MCF 10A (cell line): ENCODE measurements at regions of chr11 and their contacts with region 1.

Region 1: DNA sequence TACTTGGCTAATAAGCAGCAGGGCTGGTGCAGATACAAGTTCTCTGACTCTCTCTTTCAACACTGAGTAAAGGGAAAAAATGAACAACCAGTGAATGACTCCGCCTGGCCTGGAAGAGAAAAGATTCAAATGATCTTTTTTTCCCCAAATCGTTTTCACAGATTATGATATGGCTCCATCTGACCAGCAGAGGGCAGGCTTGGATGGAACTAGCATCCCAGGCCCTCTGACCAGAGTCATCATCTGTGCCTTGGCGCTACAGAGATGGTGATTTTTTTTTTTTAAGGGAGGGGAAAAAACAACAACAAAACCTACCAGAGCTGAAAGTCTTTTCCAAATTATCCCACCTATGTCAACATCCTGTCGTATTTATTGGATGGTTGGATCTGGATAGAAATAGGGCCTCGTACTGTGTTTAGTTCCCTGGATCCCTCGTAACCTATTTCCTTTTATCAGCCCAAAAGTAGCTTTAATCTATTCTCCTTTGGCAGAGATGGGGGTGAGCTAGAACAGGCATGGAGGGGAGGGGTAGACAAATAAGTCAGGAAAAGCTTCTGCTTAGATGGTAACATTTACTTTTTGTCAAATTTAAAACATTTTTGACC is 69.7 kb downstream of the PRSS23 start:
- DNase-seq: peak; percentile 71
- H3K4me3 Mint-ChIP-seq: no peak overlapping the region
- H3K27ac Mint-ChIP-seq: no peak overlapping the region
- H3K4me1 Mint-ChIP-seq: peaks cover 5% of the 10 kb centered on the region
- H3K27me3 Mint-ChIP-seq: no peaks in the 10 kb centered on the region
- CTCF ChIP-seq: peak; percentile 81

Region 2: GRCh38 chr11:86802601-86803051 is 67.4 kb before region 1 on chr11:
- CTCF ChIA-PET with region 1: no interaction called
- POLR2A ChIA-PET with region 1: no interaction called
- intact Hi-C with region 1: no loop called
- DNase-seq: peak; percentile 61
- H3K4me3 Mint-ChIP-seq: no peak overlapping the region
- H3K27ac Mint-ChIP-seq: no peak overlapping the region
- H3K4me1 Mint-ChIP-seq: peaks cover 11% of the 10 kb centered on the region
- H3K27me3 Mint-ChIP-seq: no peaks in the 10 kb centered on the region
- CTCF ChIP-seq: peak; percentile 69

Region 3: DNA sequence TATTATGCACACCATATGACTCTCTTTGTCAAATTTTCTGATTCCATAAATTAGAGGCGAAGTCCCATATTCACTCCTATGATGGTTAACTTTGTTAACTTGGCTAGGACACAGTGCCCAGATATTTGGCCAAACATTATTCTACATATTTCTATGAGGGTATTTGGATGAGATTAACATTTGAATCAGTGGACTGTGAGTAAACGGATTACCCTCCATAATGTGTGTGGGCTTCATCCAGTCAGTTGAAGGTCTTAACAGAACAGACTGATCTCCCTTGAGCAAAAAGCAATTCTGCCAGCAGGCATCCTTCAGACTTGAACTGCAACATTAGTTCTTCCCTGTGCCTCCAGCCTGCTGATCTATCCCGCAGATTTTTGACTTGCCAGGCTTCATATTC is 15.2 kb after region 1 on chr11:
- CTCF ChIA-PET with region 1: interaction called, 15 read pairs
- POLR2A ChIA-PET with region 1: no interaction called
- intact Hi-C with region 1: no loop called
- DNase-seq: no peak
- H3K4me3 Mint-ChIP-seq: no peak overlapping the region
- H3K27ac Mint-ChIP-seq: no peak overlapping the region
- H3K4me1 Mint-ChIP-seq: no peaks in the 10 kb centered on the region
- H3K27me3 Mint-ChIP-seq: no peaks in the 10 kb centered on the region
- CTCF ChIP-seq: no peak

Region 4: DNA sequence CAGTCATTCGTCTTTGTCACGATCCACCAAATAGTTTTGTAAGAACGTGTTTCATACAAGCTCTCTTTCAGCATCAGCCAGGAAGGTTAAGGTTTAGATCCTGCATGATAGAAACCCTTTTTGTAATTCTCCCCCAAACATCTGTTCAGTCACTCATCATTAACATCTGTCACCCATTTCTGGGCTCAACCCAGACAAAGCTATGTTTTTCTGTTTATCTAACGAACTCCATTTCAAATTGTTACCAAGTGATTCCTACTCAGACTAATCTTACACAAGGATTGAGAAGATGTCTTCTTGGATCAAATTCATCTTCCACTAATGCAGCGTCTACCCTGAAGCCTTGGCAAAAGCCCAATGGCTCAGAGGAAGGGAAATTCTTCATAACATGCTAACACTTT is 26.4 kb after region 1 on chr11:
- CTCF ChIA-PET with region 1: interaction called, 20 read pairs
- POLR2A ChIA-PET with region 1: no interaction called
- intact Hi-C with region 1: no loop called
- DNase-seq: no peak
- H3K4me3 Mint-ChIP-seq: no peak overlapping the region
- H3K27ac Mint-ChIP-seq: no peak overlapping the region
- H3K4me1 Mint-ChIP-seq: peaks cover 5% of the 10 kb centered on the region
- H3K27me3 Mint-ChIP-seq: no peaks in the 10 kb centered on the region
- CTCF ChIP-seq: no peak

Region 5: GRCh38 chr11:86910592-86910991 is 40.5 kb after region 1 on chr11:
- CTCF ChIA-PET with region 1: interaction called, 401 read pairs
- POLR2A ChIA-PET with region 1: no interaction called
- intact Hi-C with region 1: no loop called
- DNase-seq: no peak
- H3K4me3 Mint-ChIP-seq: no peak overlapping the region
- H3K27ac Mint-ChIP-seq: no peak overlapping the region
- H3K4me1 Mint-ChIP-seq: peaks cover 6% of the 10 kb centered on the region
- H3K27me3 Mint-ChIP-seq: no peaks in the 10 kb centered on the region
- CTCF ChIP-seq: no peak

Region 6: GRCh38 chr11:86938900-86939880 is 69.1 kb after region 1 on chr11:
- CTCF ChIA-PET with region 1: interaction called, 12 read pairs
- POLR2A ChIA-PET with region 1: no interaction called
- intact Hi-C with region 1: no loop called
- DNase-seq: peak; percentile 60
- H3K4me3 Mint-ChIP-seq: no peak overlapping the region
- H3K27ac Mint-ChIP-seq: no peak overlapping the region
- H3K4me1 Mint-ChIP-seq: peaks cover 8% of the 10 kb centered on the region
- H3K27me3 Mint-ChIP-seq: no peaks in the 10 kb centered on the region
- CTCF ChIP-seq: peak; percentile 54